ENCODE measurements at regions of chr10 and their contacts with region 1.

Region 1: GRCh38 chr10:27223964-27224363 is 16.6 kb downstream of the ACBD5 start:
- DNase-seq: peak; percentile 48
- H3K4me3 Mint-ChIP-seq: no peak overlapping the region
- H3K27ac Mint-ChIP-seq: no peak overlapping the region
- H3K4me1 Mint-ChIP-seq: peaks cover 9% of the 10 kb centered on the region
- H3K27me3 Mint-ChIP-seq: no peaks in the 10 kb centered on the region

Region 2: DNA sequence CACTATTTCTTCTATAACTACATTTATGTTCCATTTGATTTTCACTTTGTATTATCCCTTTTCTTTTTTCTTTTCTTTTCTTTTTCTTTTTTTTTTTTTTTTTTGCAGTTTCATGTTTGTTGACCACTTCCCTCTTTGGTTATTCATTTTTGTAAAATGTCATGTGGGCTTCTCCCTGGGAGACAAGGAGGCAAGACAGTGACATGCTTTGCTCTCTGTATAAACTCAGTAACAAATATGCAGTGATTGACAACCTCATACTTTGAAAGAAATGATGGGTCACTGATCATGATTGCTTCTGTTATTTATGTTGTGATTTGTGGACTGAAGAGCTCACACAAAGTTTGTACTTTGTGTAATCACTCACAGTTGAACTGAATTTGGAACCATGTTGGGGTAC is 273.0 kb before region 1 on chr10:
- CTCF ChIA-PET with region 1: no interaction called
- DNase-seq: no peak
- H3K4me3 Mint-ChIP-seq: no peak overlapping the region
- H3K27ac Mint-ChIP-seq: no peak overlapping the region
- H3K4me1 Mint-ChIP-seq: no peaks in the 10 kb centered on the region
- H3K27me3 Mint-ChIP-seq: peaks cover 17% of the 10 kb centered on the region

Region 3: DNA sequence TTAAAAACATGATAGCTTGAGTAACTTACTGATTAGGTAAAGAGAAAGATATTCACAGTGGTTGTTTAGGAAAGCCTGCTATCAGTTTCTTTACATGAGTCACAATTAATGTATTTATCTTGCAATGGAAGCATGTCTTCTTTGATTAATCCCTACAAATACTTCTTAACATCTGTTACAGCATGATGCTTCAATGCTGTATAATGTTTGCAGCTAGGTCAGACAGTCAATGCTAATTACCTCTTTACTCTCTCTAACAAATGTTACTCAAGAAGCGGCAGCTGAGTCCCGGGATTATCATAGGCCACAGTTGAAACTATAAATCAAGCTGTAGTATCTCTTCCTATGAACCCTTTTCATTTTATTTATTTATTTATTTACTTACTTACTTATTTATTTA is 16.6 kb before region 1 on chr10:
- CTCF ChIA-PET with region 1: interaction called, 11 read pairs
- DNase-seq: no peak
- H3K4me3 Mint-ChIP-seq: no peak overlapping the region
- H3K27ac Mint-ChIP-seq: no peak overlapping the region
- H3K4me1 Mint-ChIP-seq: no peaks in the 10 kb centered on the region
- H3K27me3 Mint-ChIP-seq: no peaks in the 10 kb centered on the region

Region 4: GRCh38 chr10:27235706-27236105 is 11.7 kb after region 1 on chr10:
- CTCF ChIA-PET with region 1: interaction called, 25 read pairs
- DNase-seq: no peak
- H3K4me3 Mint-ChIP-seq: no peak overlapping the region
- H3K27ac Mint-ChIP-seq: no peak overlapping the region
- H3K4me1 Mint-ChIP-seq: peaks cover 12% of the 10 kb centered on the region
- H3K27me3 Mint-ChIP-seq: no peaks in the 10 kb centered on the region

Region 5: GRCh38 chr10:27285108-27285507 is 61.1 kb after region 1 on chr10:
- CTCF ChIA-PET with region 1: interaction called, 13 read pairs
- DNase-seq: peak; percentile 52
- H3K4me3 Mint-ChIP-seq: no peak overlapping the region
- H3K27ac Mint-ChIP-seq: no peak overlapping the region
- H3K4me1 Mint-ChIP-seq: no peaks in the 10 kb centered on the region
- H3K27me3 Mint-ChIP-seq: peaks cover 10% of the 10 kb centered on the region